MCF 10A (cell line): ENCODE measurements at regions of chr3 and their contacts with region 1.

Region 1: DNA sequence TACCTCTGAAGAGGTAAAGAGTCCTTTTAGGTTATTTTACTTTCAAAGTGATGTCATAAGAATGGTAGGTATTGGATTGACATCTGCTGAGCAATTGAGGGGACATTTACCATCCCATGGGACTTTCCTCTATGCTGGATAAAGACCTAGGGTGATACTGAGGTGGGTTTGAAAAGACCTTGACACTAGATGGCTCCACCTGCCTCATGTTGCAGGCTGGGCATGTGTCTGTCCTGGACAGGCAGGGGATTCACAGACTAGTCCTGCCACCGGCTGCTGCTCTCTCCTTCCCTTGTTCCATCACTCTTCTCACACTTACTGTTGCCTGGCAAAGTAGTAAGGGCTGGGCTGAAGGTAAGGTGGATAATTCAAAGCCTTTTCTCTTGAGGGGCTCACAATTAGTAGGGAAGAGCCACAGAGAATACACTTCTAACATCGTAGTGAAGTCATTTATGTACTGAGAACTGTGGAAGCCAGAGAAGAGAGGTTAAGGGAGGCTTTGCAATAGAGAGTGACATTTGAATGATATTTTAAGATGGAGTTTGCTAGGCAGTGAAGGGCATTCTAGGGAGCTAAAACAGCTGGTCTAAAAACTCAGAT is 27.7 kb downstream of the TRAK1 start:
- DNase-seq: peak; percentile 72
- H3K4me3 Mint-ChIP-seq: no peak overlapping the region
- H3K27ac Mint-ChIP-seq: peak overlapping the region; percentile 72
- H3K4me1 Mint-ChIP-seq: peaks cover 49% of the 10 kb centered on the region
- H3K27me3 Mint-ChIP-seq: no peaks in the 10 kb centered on the region
- CTCF ChIP-seq: peak; percentile 36

Region 2: DNA sequence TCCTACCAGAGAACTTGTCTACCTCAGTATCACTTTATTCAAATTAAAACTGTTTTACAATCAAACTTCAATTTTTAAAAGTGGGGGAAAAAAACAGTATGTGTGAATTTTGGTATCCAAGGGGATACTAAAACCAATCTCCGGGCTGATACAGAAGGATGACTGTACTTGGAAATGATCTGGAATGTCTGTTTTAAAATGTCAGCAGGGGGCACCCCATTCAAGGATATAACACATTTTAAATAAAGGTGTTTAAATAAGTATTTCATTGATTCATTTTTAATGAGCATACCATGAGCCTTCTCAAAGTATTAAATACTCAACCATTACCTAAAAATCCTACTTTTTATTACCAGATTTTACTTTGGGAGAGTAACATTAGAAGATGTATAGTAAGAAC is 224.9 kb before region 1 on chr3:
- CTCF ChIA-PET with region 1: interaction called, 4 read pairs
- POLR2A ChIA-PET with region 1: interaction called, 3 read pairs
- intact Hi-C with region 1: loop called (anchors 5 kb)
- DNase-seq: peak; percentile 65
- H3K4me3 Mint-ChIP-seq: no peak overlapping the region
- H3K27ac Mint-ChIP-seq: no peak overlapping the region
- H3K4me1 Mint-ChIP-seq: no peaks in the 10 kb centered on the region
- H3K27me3 Mint-ChIP-seq: no peaks in the 10 kb centered on the region
- CTCF ChIP-seq: peak; percentile 40

Region 3: DNA sequence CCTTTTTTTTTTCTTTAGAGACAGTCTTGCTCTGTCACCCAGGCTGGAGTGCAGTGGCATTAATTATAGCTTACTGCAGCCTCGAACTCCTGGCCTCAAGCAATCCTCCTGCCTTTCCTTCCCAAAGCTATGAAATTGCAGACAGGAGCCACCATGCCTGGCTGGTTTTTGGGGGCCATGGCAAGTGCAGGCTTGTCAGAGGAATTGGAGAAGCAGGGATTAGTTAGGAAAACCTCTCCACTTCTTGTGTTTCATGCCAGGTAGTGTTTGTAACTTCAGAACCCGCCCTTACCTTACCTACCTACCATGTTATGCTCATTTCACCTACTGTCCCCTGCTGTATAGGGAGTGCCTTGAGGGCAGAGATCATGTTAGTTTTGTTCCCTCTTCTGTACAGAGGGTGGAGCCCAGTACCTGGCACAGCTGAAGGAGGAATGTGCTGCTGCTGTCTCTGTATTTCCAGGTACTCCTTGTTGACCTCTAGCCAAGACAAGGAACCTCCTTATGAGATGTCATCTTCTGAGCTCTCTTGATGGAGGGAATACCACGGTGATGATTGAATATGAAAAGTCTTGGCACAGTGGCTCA is 16.1 kb after region 1 on chr3:
- CTCF ChIA-PET with region 1: interaction called, 14 read pairs
- POLR2A ChIA-PET with region 1: interaction called, 3 read pairs
- intact Hi-C with region 1: no loop called
- DNase-seq: peak; percentile 57
- H3K4me3 Mint-ChIP-seq: peak overlapping the region; percentile 11
- H3K27ac Mint-ChIP-seq: peak overlapping the region; percentile 61
- H3K4me1 Mint-ChIP-seq: peaks cover 13% of the 10 kb centered on the region
- H3K27me3 Mint-ChIP-seq: no peaks in the 10 kb centered on the region
- CTCF ChIP-seq: no peak

Region 4: DNA sequence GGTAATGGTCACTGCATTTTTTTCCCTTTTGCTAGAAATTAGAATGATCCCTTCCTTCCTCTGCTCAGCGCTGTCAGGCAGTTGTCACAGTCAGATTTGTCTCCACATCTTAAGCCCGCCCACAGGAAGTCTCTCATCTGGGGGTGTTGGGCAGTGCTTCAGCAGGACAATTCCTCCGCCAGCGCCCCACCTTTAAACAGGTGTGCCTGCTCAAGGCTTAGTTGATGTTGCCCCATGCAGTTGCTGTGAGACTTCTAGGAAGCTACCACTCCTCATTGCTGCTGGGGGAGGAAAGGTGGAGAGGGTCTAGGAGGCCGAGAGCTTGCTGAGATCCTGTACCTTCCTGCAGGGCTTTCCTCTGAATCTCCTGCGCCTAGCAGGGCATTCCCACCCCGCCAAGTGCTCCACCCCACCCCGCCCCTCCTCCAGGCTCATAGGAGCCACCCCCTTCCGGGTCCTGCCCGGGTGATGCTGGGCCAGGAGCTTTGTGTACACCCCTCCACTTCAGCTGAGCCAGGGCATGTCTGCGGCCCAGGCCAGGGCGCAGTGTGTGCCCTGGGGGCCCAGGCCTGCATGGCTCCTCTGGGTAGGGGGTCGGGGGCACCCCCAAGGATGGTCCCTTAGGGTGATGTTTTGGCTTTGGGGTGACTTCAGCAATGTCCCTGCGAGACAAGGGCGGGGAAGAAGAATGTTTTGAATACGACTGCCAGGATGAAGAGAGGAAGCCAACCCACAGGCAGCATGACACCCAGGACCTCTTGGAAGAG is 41.0 kb after region 1 on chr3:
- CTCF ChIA-PET with region 1: interaction called, 7 read pairs
- POLR2A ChIA-PET with region 1: interaction called, 12 read pairs
- intact Hi-C with region 1: no loop called
- DNase-seq: peak; percentile 86
- H3K4me3 Mint-ChIP-seq: peak overlapping the region; percentile 68
- H3K27ac Mint-ChIP-seq: peak overlapping the region; percentile 60
- H3K4me1 Mint-ChIP-seq: peaks cover 18% of the 10 kb centered on the region
- H3K27me3 Mint-ChIP-seq: no peaks in the 10 kb centered on the region
- CTCF ChIP-seq: no peak

Region 5: GRCh38 chr3:42229942-42230688 is 111.3 kb after region 1 on chr3:
- CTCF ChIA-PET with region 1: interaction called, 17 read pairs
- POLR2A ChIA-PET with region 1: no interaction called
- intact Hi-C with region 1: no loop called
- DNase-seq: peak; percentile 50
- H3K4me3 Mint-ChIP-seq: no peak overlapping the region
- H3K27ac Mint-ChIP-seq: no peak overlapping the region
- H3K4me1 Mint-ChIP-seq: peaks cover 5% of the 10 kb centered on the region
- H3K27me3 Mint-ChIP-seq: peaks cover 13% of the 10 kb centered on the region
- CTCF ChIP-seq: peak; percentile 65